Gastrocnemius medialis (tissue), 4 donors: ENCODE measurements at regions of chr2 and their contacts with region 1.

Region 1: GRCh38 chr2:70142590-70143313 is 48.1 kb downstream of the C2orf42 start:
- DNase-seq: peak; percentile 98 to 99
- ATAC-seq: peak; percentile 74 to 75
- H3K4me3 ChIP-seq: peak overlapping the region; percentile 43 to 70 (median 62)
- H3K27ac ChIP-seq: peak overlapping the region; percentile 97 to 100 (median 98)
- H3K4me1 ChIP-seq: peaks cover 19 to 20% of the 10 kb centered on the region in 2 donors
- H3K27me3 ChIP-seq: no peaks in the 10 kb centered on the region
- CTCF ChIP-seq: peak; percentile 96 to 100 (median 99)
- POLR2A ChIP-seq: peak; percentile 27 to 71

Region 2: GRCh38 chr2:69902213-69902922 is 240.4 kb before region 1 on chr2:
- in situ Hi-C with region 1: loop called in 1 of 4 experiments (anchors 5 kb)
- intact Hi-C with region 1: no loop called
- DNase-seq: no peak
- ATAC-seq: no peak
- H3K4me3 ChIP-seq: no peak overlapping the region
- H3K27ac ChIP-seq: peak overlapping the region in 1 of 4 donors; percentile 23
- H3K4me1 ChIP-seq: no peaks in the 10 kb centered on the region
- H3K27me3 ChIP-seq: no peaks in the 10 kb centered on the region
- CTCF ChIP-seq: no peak
- POLR2A ChIP-seq: no peak

Region 3: GRCh38 chr2:70070541-70071268 is 72.0 kb before region 1 on chr2:
- in situ Hi-C with region 1: loop called in 1 of 4 experiments (anchors 10 kb)
- intact Hi-C with region 1: loop called (anchors 1 kb)
- DNase-seq: peak; percentile 71 to 78
- ATAC-seq: peak; percentile 86
- H3K4me3 ChIP-seq: peak overlapping the region; percentile 6 to 30 (median 19)
- H3K27ac ChIP-seq: peak overlapping the region; percentile 84 to 94 (median 88)
- H3K4me1 ChIP-seq: peaks cover 29 to 35% of the 10 kb centered on the region in 2 donors
- H3K27me3 ChIP-seq: no peaks in the 10 kb centered on the region
- CTCF ChIP-seq: peak; percentile 84 to 94 (median 87)
- POLR2A ChIP-seq: no peak

Region 4: GRCh38 chr2:70124983-70125480 is 17.7 kb before region 1 on chr2:
- in situ Hi-C with region 1: no loop called
- intact Hi-C with region 1: loop called (anchors 1 kb)
- DNase-seq: peak; percentile 43 to 64
- ATAC-seq: peak; percentile 29 to 36
- H3K4me3 ChIP-seq: peak overlapping the region; percentile 64 to 80 (median 74)
- H3K27ac ChIP-seq: peak overlapping the region; percentile 89 to 100 (median 98)
- H3K4me1 ChIP-seq: peaks cover 47 to 51% of the 10 kb centered on the region in 2 donors
- H3K27me3 ChIP-seq: no peaks in the 10 kb centered on the region
- CTCF ChIP-seq: peak in 1 of 5 experiments; percentile 15
- POLR2A ChIP-seq: peak; percentile 40 to 67

Region 5: DNA sequence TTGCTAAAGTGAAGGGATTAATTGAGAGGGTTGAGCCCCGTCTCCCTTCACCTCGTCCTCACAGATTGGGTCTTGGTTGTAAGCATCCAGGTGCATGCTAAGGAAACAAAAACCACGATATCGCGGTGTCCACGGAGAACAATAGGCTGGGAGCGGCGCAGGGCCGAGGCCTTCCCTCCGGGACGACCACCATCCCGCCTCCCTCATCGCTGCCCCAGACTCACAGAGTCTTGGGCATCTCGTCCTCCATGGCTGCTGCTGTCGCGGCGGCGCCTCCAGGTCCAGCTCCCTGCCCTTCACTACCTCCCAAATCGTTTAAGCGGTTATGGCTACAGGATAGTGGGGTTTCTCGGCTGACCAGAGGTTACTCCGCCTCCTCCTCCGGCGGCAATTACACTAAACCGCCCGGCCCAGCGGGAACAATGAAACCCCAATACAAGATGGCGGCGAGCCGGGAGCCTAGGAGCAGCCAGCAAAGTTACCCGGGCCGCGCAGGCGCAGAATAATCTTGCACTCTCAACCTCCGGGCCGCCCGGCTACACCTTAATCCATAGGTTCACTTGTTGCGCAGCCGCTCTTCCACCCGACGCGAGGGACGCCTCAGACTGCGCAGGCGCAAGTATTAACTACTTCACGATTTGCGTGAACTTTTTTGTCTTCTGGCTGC is 105.6 kb after region 1 on chr2 and contains the start of gene TIA1:
- in situ Hi-C with region 1: no loop called
- intact Hi-C with region 1: loop called (anchors 2 kb)
- DNase-seq: peak; percentile 97 to 98
- ATAC-seq: peak; percentile 96 to 97
- H3K4me3 ChIP-seq: peak within 1 kb of the TSS; percentile 87 to 99 (median 92)
- H3K27ac ChIP-seq: peak within 1 kb of the TSS; percentile 94 to 99 (median 95)
- H3K4me1 ChIP-seq: peaks cover 21 to 27% of the 10 kb centered on the region in 2 donors
- H3K27me3 ChIP-seq: no peaks in the 10 kb centered on the region
- CTCF ChIP-seq: no peak
- POLR2A ChIP-seq: peak; percentile 65 to 73
- total RNA-seq, gene TIA1: 20.2 to 54.8 (median 26.6) TPM